Activated CD8-positive, alpha-beta T cell treated with anti-CD3 and anti-CD28 coated beads for 36 hours (primary cell): ENCODE measurements at regions of chr7 and their contacts with region 1.

Region 1: GRCh38 chr7:139118234-139118804 is 8.8 kb upstream of the ZC3HAV1 start:
- DNase-seq: peak; percentile 63
- ATAC-seq: peak; percentile 69
- H3K4me3 Mint-ChIP-seq: peak overlapping the region; percentile 38
- H3K27ac Mint-ChIP-seq: peak overlapping the region; percentile 56
- H3K4me1 Mint-ChIP-seq: peaks cover 39% of the 10 kb centered on the region
- H3K27me3 Mint-ChIP-seq: no peaks in the 10 kb centered on the region
- CTCF ChIP-seq: no peak

Region 2: GRCh38 chr7:139104091-139104450 is 14.2 kb before region 1 on chr7:
- CTCF ChIA-PET with region 1: interaction called, 3 read pairs
- POLR2A ChIA-PET with region 1: interaction called, 14 read pairs
- intact Hi-C with region 1: no loop called
- DNase-seq: peak; percentile 78
- ATAC-seq: peak; percentile 2
- H3K4me3 Mint-ChIP-seq: peak overlapping the region; percentile 85
- H3K27ac Mint-ChIP-seq: peak overlapping the region; percentile 95
- H3K4me1 Mint-ChIP-seq: peaks cover 37% of the 10 kb centered on the region
- H3K27me3 Mint-ChIP-seq: no peaks in the 10 kb centered on the region
- CTCF ChIP-seq: no peak

Region 3: GRCh38 chr7:139230774-139231512 is 112.6 kb after region 1 on chr7 and contains the start of gene UBN2:
- CTCF ChIA-PET with region 1: no interaction called
- POLR2A ChIA-PET with region 1: no interaction called
- intact Hi-C with region 1: loop called (anchors 5 kb)
- DNase-seq: peak; percentile 94
- ATAC-seq: peak; percentile 89
- H3K4me3 Mint-ChIP-seq: peak within 1 kb of the TSS; percentile 100
- H3K27ac Mint-ChIP-seq: peak within 1 kb of the TSS; percentile 98
- H3K4me1 Mint-ChIP-seq: peaks cover 26% of the 10 kb centered on the region
- H3K27me3 Mint-ChIP-seq: peaks cover 8% of the 10 kb centered on the region
- CTCF ChIP-seq: no peak
- total RNA-seq, gene UBN2: 7.0 to 7.6 TPM